Right ventricle myocardium inferior (tissue), 1 donor: ENCODE measurements at regions of chr13 and their contacts with region 1.

Region 1: GRCh38 chr13:41955605-41956004 is 5.3 kb downstream of the VWA8 start:
- DNase-seq: no peak
- ATAC-seq: no peak

Region 2: GRCh38 chr13:41788552-41788951 is 167.1 kb before region 1 on chr13:
- intact Hi-C with region 1: no loop called
- DNase-seq: no peak
- ATAC-seq: peak; percentile 72

Region 3: DNA sequence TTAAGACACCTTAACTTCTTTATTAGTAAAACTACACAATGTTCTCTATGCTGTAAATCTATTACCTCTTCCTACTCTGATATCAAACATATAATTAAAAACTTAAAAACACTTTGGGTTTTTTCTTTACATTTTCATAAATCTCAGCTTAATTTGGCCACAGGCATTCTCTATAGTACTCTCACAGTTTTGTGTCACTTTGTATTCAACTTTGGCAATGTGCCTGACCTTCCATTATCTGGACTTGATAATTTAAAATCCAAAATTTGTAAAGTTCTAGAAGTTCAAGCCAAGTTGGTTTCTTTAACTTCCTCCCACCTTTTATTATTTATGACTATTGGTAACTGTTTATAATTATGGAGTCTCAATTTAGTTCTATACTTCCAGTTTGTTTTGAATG is 41.1 kb before region 1 on chr13:
- intact Hi-C with region 1: loop called (anchors 5 kb)
- DNase-seq: no peak
- ATAC-seq: no peak